GM18951 (cell line): ENCODE measurements at regions of chr18 and their contacts with region 1.

Region 1: DNA sequence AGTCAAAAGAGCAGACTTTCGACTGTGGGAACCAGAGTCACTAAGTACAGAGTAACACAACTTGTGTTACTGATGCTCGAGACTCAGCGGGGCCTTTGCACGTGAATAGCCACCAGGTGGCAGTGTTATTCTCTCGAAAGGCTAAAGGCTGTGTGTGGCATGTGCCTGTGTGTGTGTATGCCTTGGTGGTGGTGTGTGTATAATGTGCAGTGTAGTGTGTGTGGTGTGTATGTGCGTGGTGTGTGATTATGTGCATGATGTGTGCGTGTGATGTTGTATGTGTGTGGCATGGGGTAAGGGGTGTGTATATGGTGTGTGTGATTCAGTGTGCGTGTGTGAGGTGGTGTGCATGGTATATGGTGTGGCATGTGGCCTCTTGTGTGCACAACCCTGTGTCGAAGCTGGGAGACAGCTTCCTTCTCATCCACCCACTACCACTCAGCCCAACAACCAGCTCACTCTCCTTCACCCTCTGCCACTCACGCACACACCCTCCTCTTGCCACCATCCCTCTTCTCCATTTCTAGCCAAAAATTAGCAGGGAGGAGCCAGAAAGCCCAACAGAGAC is 83.0 kb upstream of the ZNF532 start:
- POLR2A ChIP-seq: no peak

Region 2: GRCh38 chr18:59056706-59057492 is 275.2 kb after region 1 on chr18:
- in situ Hi-C with region 1: loop called (anchors 5 kb)
- POLR2A ChIP-seq: no peak